MCF 10A (cell line): ENCODE measurements at regions of chr6 and their contacts with region 1.

Region 1: GRCh38 chr6:106823732-106824351 is 150.7 kb downstream of the CD24 start:
- DNase-seq: no peak
- H3K4me3 Mint-ChIP-seq: no peak overlapping the region
- H3K27ac Mint-ChIP-seq: no peak overlapping the region
- H3K4me1 Mint-ChIP-seq: peaks cover 6% of the 10 kb centered on the region
- H3K27me3 Mint-ChIP-seq: no peaks in the 10 kb centered on the region
- CTCF ChIP-seq: no peak

Region 2: DNA sequence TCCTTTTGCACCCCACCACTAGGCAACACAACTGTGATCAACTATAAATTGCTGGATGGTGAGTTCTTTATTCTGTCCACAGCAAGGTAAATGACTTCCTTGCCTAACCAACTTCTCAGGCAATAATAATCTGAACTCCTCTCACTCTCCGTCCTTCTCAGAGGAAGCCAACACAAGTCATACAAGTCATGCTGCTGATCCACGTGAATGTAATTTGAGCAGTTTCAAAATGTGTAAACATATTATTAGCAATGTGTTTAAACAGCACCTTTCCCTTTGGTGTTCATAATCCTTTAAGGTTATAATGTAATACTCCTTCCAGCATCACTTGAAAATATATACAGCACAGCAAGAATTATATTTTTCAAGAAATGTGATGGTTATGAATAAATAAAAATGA is 66.6 kb before region 1 on chr6:
- CTCF ChIA-PET with region 1: no interaction called
- POLR2A ChIA-PET with region 1: no interaction called
- intact Hi-C with region 1: loop called (anchors 2 kb)
- DNase-seq: peak; percentile 22
- H3K4me3 Mint-ChIP-seq: no peak overlapping the region
- H3K27ac Mint-ChIP-seq: no peak overlapping the region
- H3K4me1 Mint-ChIP-seq: peaks cover 7% of the 10 kb centered on the region
- H3K27me3 Mint-ChIP-seq: no peaks in the 10 kb centered on the region
- CTCF ChIP-seq: no peak

Region 3: GRCh38 chr6:107161521-107161920 is 337.7 kb after region 1 on chr6:
- CTCF ChIA-PET with region 1: no interaction called
- POLR2A ChIA-PET with region 1: no interaction called
- intact Hi-C with region 1: no loop called
- DNase-seq: no peak
- H3K4me3 Mint-ChIP-seq: no peak overlapping the region
- H3K27ac Mint-ChIP-seq: no peak overlapping the region
- H3K4me1 Mint-ChIP-seq: peaks cover 6% of the 10 kb centered on the region
- H3K27me3 Mint-ChIP-seq: no peaks in the 10 kb centered on the region
- CTCF ChIP-seq: no peak